ENCODE measurements at regions of chr3 and their contacts with region 1.

Region 1: GRCh38 chr3:140941434-140942220 is at the start of gene SLC25A36:
- DNase-seq: peak; percentile 99
- ATAC-seq: peak; percentile 96
- H3K4me3 ChIP-seq: peak within 1 kb of the TSS; percentile 63 to 86 (median 80)
- H3K4me3 Mint-ChIP-seq: peak within 1 kb of the TSS; percentile 95
- H3K27ac ChIP-seq: peak within 1 kb of the TSS; percentile 91 to 95
- H3K27ac Mint-ChIP-seq: peak within 1 kb of the TSS; percentile 97
- H3K4me1 ChIP-seq: peaks cover 11 to 26% of the 10 kb centered on the region in 2 donors
- H3K4me1 Mint-ChIP-seq: peaks cover 42% of the 10 kb centered on the region
- H3K27me3 ChIP-seq: no peaks in the 10 kb centered on the region
- H3K27me3 Mint-ChIP-seq: no peaks in the 10 kb centered on the region
- CTCF ChIP-seq: no peak
- total RNA-seq, gene SLC25A36: 76.0 and 86.3 TPM in 2 replicates

Region 2: GRCh38 chr3:139343895-139344856 is 1597.5 kb before region 1 on chr3 and contains the start of gene MRPS22:
- CTCF ChIA-PET with region 1: no interaction called
- POLR2A ChIA-PET with region 1: no interaction called
- intact Hi-C with region 1: loop called (anchors 5 kb)
- DNase-seq: peak; percentile 86
- ATAC-seq: peak; percentile 98
- H3K4me3 ChIP-seq: peak within 1 kb of the TSS; percentile 57 to 95 (median 88)
- H3K4me3 Mint-ChIP-seq: no peak within 1 kb of the TSS
- H3K27ac ChIP-seq: peak within 1 kb of the TSS; percentile 51 to 83
- H3K27ac Mint-ChIP-seq: peak within 1 kb of the TSS; percentile 66
- H3K4me1 ChIP-seq: peaks cover 10 to 14% of the 10 kb centered on the region in 2 donors
- H3K4me1 Mint-ChIP-seq: peaks cover 8% of the 10 kb centered on the region
- H3K27me3 ChIP-seq: peaks cover 0 to 13% (median 3%) of the 10 kb centered on the region in 4 experiments
- H3K27me3 Mint-ChIP-seq: peaks cover 17% of the 10 kb centered on the region
- CTCF ChIP-seq: no peak
- total RNA-seq, gene MRPS22: 32.5 and 38.9 TPM in 2 replicates

Region 3: DNA sequence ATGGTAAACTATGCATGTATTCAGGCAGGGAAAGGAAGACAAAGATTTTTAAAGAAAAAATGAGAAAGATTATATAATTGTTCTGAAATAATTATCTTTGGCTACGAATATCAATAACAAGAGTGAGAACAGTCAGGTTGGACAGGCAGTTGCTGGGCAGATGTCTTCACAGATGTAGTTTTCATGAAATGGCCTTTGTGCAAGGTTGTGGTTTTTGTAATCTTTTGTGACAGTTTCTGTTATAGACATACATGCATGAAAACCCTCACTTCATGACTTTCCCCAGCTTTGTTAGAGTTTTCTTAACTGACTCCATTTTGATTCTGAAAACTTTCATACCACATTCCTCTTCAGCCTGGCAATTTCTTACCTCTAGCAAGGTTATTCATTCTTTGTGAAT is 34.8 kb before region 1 on chr3:
- CTCF ChIA-PET with region 1: no interaction called
- POLR2A ChIA-PET with region 1: no interaction called
- intact Hi-C with region 1: no loop called
- DNase-seq: no peak
- ATAC-seq: no peak
- H3K4me3 ChIP-seq: no peak overlapping the region
- H3K4me3 Mint-ChIP-seq: no peak overlapping the region
- H3K27ac ChIP-seq: no peak overlapping the region
- H3K27ac Mint-ChIP-seq: no peak overlapping the region
- H3K4me1 ChIP-seq: no peaks in the 10 kb centered on the region
- H3K4me1 Mint-ChIP-seq: no peaks in the 10 kb centered on the region
- H3K27me3 ChIP-seq: no peaks in the 10 kb centered on the region
- H3K27me3 Mint-ChIP-seq: no peaks in the 10 kb centered on the region
- CTCF ChIP-seq: no peak